IMR-90 (cell line): ENCODE measurements at regions of chr2 and their contacts with region 1.

Region 1: DNA sequence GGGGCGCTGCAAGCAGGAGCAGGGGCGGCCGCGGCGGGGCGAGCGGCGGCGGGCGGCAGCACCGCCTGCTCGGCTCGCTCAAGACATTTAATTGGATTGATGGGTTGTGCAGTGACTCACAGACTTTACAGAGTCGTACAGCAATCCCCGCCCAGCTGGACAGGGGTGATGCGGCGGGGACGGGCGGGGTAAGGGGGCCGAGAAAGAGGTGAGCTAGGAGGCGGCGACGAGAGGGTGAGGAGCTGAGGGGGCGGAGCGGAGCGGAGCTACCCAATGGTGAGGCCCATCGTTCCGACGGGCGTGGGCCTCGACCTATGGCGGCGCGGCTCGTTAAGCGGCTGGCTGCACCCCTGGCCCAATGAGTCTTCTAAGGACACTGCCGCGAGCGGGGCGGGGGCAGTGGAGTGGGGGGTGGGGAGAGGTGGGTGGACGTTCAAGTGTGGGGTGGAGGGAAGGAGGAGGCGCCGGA is 97.1 kb upstream of the SERTAD2 start:
- DNase-seq: peak; percentile 99
- ATAC-seq: peak; percentile 88
- H3K4me3 ChIP-seq: peak overlapping the region; percentile 67
- H3K27ac ChIP-seq: peak overlapping the region; percentile 77
- H3K4me1 ChIP-seq: peaks cover 2% of the 10 kb centered on the region; the same call in 1 of the 2 replicates
- H3K27me3 ChIP-seq: no peaks in the 10 kb centered on the region
- CTCF ChIP-seq: peak; percentile 35; the same call in 1 of the 2 replicates
- POLR2A ChIP-seq: peak; percentile 67; the same call in 1 of the 2 replicates
- RAD21 ChIP-seq: peak; percentile 46; the same call in 1 of the 2 replicates

Region 2: DNA sequence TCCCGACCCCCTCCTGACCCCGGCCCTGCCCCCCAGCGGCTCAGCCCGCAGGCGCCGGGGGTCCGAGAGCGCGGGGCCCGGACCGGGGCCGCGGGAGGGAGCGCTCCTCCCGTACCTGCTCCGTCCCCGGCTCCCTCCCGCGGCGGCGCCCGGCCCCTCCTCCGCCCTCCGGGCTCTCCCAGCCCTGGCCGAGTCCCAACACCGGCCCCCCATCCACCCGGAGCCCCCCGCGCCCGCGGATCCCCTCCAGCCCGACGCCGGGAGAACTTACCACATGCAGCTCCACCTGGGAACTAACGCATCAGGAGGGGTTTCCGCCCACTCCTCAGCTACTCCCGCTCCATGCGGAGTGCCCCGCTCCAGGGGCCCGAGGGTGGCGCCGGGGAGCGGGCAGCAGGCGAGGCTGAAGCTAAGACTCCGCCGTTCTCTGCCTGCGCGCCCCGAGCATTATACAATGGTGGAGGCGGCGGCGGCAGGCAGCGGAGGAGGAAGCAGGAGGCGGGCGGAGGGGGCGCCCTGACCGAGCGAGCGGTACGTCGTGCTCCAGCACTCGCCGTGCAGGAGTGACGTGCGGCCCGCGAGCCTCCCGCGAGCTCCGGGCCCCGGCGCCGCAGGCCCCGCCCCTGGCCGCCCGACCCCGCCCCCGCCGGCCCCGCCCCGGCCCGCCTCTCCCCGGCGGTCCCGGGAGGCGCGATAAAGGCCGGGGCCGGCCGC is 97.3 kb before region 1 on chr2 and contains the start of gene SERTAD2:
- CTCF ChIA-PET with region 1: interaction called, 6 read pairs
- POLR2A ChIA-PET with region 1: interaction called, 8 read pairs
- dilution Hi-C with region 1: no loop called
- in situ Hi-C with region 1: no loop called
- intact Hi-C with region 1: loop called (anchors 1 kb)
- DNase-seq: peak; percentile 84
- ATAC-seq: peak; percentile 91
- H3K4me3 ChIP-seq: peak within 1 kb of the TSS; percentile 98
- H3K27ac ChIP-seq: peak within 1 kb of the TSS; percentile 98
- H3K4me1 ChIP-seq: peaks cover 5% of the 10 kb centered on the region
- H3K27me3 ChIP-seq: no peaks in the 10 kb centered on the region
- CTCF ChIP-seq: peak; percentile 16; the same call in 1 of the 2 replicates
- POLR2A ChIP-seq: no peak
- RAD21 ChIP-seq: peak; percentile 24; the same call in 1 of the 2 replicates
- total RNA-seq, gene SERTAD2: 5.0 and 6.7 TPM in 2 replicates

Region 3: DNA sequence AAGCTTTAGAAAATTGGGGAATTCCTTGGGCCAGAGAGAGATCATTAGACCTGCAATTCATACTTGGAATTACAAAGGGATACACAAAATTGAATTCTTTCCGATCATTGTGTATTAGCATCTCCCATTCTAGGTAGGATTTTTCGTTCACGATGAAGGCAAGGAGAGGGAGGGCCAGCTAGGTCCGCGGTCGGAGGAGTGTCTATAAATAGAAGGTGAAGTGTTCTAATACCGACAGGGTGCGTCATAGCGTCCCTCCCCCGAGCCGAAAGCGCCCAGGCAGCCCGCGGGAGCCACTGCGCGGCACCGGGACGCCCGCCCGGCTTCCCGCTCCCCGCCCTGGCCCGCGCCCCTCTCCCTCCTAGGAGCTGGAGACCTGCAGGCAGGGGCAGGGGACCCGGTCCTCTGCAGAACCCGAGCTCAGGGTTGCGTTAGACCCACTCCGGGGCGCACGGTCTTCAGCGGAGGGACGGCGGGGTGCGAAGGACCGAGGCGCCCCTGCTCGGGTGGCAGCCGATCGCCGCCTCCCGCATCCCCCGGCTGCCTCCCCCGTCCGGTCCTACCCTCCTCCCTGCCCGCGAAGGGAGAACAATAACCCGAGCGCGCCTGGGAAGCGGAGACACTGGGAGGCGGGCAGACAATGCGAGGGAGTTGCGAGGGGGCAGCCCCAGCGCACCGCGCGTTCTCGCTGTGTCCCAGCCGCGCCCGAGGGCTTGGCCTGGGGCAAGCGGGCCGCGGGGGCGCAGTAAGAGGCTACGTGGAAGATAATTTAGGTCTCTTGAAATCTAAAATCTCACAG is 17.0 kb after region 1 on chr2:
- CTCF ChIA-PET with region 1: no interaction called
- POLR2A ChIA-PET with region 1: interaction called, 4 read pairs
- dilution Hi-C with region 1: no loop called
- in situ Hi-C with region 1: no loop called
- intact Hi-C with region 1: loop called (anchors 1 kb)
- DNase-seq: peak; percentile 89
- ATAC-seq: peak; percentile 76
- H3K4me3 ChIP-seq: peak overlapping the region; percentile 64
- H3K27ac ChIP-seq: peak overlapping the region; percentile 91
- H3K4me1 ChIP-seq: peaks cover 16% of the 10 kb centered on the region
- H3K27me3 ChIP-seq: no peaks in the 10 kb centered on the region
- CTCF ChIP-seq: no peak
- POLR2A ChIP-seq: peak; percentile 58
- RAD21 ChIP-seq: peak; percentile 32; the same call in 1 of the 2 replicates

Region 4: DNA sequence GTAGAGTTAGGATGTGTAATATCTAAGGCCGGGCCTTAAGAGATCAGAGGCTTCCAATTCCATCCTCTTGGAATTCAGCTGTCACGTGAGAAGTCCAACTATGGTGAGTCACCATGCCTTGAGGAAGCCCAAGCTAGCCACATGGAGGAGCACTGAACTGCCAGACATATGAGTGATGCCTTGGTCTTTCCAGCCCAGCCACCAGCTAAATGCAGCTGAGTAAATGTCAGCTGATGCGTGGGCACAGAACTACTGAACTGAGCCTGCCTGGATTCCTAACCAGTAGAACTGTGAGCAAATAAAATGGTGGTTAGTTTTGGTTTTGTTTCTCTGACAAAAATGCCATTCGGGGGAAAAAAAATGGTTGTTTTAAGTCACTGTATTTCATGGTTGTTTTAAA is 56.6 kb after region 1 on chr2:
- CTCF ChIA-PET with region 1: no interaction called
- POLR2A ChIA-PET with region 1: interaction called, 3 read pairs
- dilution Hi-C with region 1: no loop called
- in situ Hi-C with region 1: no loop called
- intact Hi-C with region 1: loop called (anchors 5 kb)
- DNase-seq: peak; percentile 100
- ATAC-seq: peak; percentile 96
- H3K4me3 ChIP-seq: no peak overlapping the region
- H3K27ac ChIP-seq: peak overlapping the region; percentile 76; the same call in 1 of the 2 replicates
- H3K4me1 ChIP-seq: peaks cover 12% of the 10 kb centered on the region
- H3K27me3 ChIP-seq: no peaks in the 10 kb centered on the region
- CTCF ChIP-seq: peak; percentile 22; the same call in 1 of the 2 replicates
- POLR2A ChIP-seq: no peak
- RAD21 ChIP-seq: peak; percentile 48

Region 5: DNA sequence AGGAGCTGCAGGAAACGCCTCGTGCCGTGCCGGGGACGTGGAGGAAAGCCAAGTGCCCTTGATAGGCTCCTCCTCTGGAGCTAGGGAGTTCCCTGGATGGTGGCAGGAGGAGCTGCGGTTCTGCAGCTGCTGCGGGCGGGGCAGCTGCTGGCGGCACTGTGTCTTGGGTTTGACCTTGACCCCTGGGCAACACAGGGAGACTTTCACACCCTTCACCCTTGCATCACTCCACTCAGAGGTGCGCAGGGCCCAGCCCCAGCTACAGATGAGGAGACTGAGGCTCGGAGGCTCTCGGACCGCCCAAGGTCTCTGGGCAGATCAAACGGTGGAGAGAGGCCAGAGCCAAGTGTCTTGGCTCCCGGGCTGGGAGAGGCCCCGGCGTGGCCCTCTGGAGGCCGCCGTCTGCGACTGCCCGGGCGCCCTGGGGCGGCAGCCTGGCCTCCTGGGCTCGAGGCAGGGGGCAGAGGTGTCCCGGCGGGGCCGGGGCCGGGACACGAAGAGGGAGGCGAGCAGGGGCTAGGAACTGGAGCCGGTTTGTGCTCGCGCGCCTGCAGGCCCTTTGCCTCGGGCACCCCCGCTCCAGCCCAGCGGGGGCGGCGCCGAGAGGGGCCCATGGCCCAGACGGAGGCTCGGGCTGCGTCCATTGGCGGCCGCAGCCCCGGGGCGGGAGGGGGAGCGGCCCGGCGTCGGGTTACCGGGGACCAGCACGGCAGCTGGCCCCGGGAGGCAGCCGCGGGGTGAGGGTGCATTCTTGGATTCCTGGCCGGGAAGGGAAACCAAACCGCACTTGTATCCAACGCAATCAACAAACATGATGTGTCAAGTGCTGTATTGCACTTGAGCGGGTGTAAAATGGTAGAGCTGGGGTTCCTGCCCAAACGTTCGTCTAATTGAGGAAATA is 108.7 kb after region 1 on chr2:
- CTCF ChIA-PET with region 1: interaction called, 3 read pairs
- POLR2A ChIA-PET with region 1: interaction called, 4 read pairs
- dilution Hi-C with region 1: no loop called
- in situ Hi-C with region 1: loop called (anchors 5 kb)
- intact Hi-C with region 1: loop called (anchors 1 kb)
- DNase-seq: peak; percentile 87
- ATAC-seq: peak; percentile 95
- H3K4me3 ChIP-seq: peak overlapping the region; percentile 15
- H3K27ac ChIP-seq: peak overlapping the region; percentile 74
- H3K4me1 ChIP-seq: peaks cover 27% of the 10 kb centered on the region
- H3K27me3 ChIP-seq: peaks cover 6% of the 10 kb centered on the region
- CTCF ChIP-seq: 0 out of 2 replicates have a peak, but pooled peaks have one; percentile 4
- POLR2A ChIP-seq: no peak
- RAD21 ChIP-seq: 0 out of 2 replicates have a peak, but pooled peaks have one; percentile 17

Region 6: DNA sequence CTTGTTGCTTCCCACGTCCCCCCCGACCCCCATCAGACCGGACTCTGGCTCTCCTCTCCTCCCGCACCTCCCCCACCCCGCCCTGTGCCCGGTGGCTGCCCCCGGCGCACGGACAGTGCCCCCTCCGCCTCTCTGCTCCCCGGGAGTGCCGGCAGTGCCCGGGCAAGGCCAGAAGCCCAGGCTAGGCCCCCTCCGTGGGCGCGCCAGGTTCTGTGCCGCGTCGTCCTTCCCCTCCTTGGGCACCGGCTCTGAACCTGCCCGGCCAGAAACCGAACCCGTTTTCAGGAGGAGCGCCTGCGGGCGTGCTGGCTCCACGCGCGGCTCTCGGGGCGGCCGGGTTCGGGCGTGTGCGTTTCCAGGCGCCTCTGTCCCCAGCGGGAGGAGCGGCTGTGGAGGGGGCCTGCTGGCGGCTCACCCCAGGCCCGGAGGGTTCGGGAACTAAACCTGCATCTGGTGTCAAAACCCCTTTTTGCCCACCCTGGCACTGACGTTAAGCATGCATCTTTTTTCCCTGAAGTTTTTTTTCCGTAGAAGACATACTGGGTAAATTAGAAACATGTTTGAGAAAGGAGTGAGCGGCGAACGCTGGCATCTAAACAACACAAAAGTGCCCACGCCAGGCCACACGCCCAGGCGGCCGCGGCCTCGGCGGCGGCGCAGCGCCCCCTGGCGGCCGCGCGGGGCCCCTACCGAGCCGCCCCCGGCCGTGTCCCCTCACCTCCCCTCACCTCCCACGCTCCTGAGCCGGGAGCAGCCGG is 114.4 kb after region 1 on chr2:
- CTCF ChIA-PET with region 1: interaction called, 3 read pairs
- POLR2A ChIA-PET with region 1: interaction called, 4 read pairs
- dilution Hi-C with region 1: no loop called
- in situ Hi-C with region 1: loop called (anchors 5 kb)
- intact Hi-C with region 1: loop called (anchors 1 kb)
- DNase-seq: peak; percentile 54
- ATAC-seq: peak; percentile 77
- H3K4me3 ChIP-seq: peak overlapping the region; percentile 58
- H3K27ac ChIP-seq: peak overlapping the region; percentile 3; the same call in 1 of the 2 replicates
- H3K4me1 ChIP-seq: peaks cover 13% of the 10 kb centered on the region
- H3K27me3 ChIP-seq: peaks cover 43% of the 10 kb centered on the region
- CTCF ChIP-seq: peak; percentile 83
- POLR2A ChIP-seq: no peak
- RAD21 ChIP-seq: peak; percentile 90